MCF 10A (cell line): ENCODE measurements at regions of chr11 and their contacts with region 1.

Region 1: DNA sequence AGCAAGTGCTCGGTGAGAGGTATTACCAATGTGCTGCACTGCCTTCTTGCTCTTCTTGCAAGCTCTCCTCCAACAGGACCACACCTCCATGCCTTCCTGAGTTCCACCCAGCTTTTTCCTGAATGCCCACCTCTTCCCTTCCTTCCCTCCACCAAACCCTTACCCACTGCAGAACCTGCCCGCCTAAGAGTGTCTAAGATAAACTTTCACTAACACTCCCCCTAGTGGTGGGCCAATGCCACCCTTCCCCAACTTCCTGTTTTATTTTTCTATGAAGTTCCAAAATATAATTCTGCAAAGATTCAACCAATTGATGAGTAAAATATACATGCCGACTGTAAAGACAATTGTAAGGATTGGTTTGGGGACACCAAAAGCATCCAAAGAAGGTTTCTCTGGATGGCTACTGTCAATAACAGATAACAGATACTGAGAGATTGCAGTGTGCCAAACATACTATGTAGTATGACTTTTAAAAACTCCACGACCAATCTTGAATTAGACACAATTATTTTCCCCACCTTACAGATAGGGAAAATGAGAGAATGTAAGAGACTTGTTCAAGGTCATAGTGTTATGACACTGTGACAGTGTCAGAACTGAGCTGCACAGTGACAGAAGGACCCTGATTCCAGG is 38.6 kb upstream of the BMAL1 start:
- DNase-seq: peak; percentile 72
- H3K4me3 Mint-ChIP-seq: no peak overlapping the region
- H3K27ac Mint-ChIP-seq: no peak overlapping the region
- H3K4me1 Mint-ChIP-seq: peaks cover 6% of the 10 kb centered on the region
- H3K27me3 Mint-ChIP-seq: no peaks in the 10 kb centered on the region
- CTCF ChIP-seq: peak; percentile 68

Region 2: GRCh38 chr11:13126430-13126829 is 112.6 kb before region 1 on chr11:
- CTCF ChIA-PET with region 1: no interaction called
- POLR2A ChIA-PET with region 1: no interaction called
- intact Hi-C with region 1: no loop called
- DNase-seq: peak; percentile 98
- H3K4me3 Mint-ChIP-seq: peak overlapping the region; percentile 53
- H3K27ac Mint-ChIP-seq: peak overlapping the region; percentile 76
- H3K4me1 Mint-ChIP-seq: peaks cover 13% of the 10 kb centered on the region
- H3K27me3 Mint-ChIP-seq: no peaks in the 10 kb centered on the region
- CTCF ChIP-seq: no peak

Region 3: GRCh38 chr11:13216019-13216710 is 22.8 kb before region 1 on chr11:
- CTCF ChIA-PET with region 1: interaction called, 47 read pairs
- POLR2A ChIA-PET with region 1: interaction called, 3 read pairs
- intact Hi-C with region 1: no loop called
- DNase-seq: peak; percentile 92
- H3K4me3 Mint-ChIP-seq: peak overlapping the region; percentile 32
- H3K27ac Mint-ChIP-seq: peak overlapping the region; percentile 85
- H3K4me1 Mint-ChIP-seq: peaks cover 26% of the 10 kb centered on the region
- H3K27me3 Mint-ChIP-seq: no peaks in the 10 kb centered on the region
- CTCF ChIP-seq: no peak

Region 4: GRCh38 chr11:13249996-13250395 is 11.0 kb after region 1 on chr11:
- CTCF ChIA-PET with region 1: interaction called, 19 read pairs
- POLR2A ChIA-PET with region 1: interaction called, 4 read pairs
- intact Hi-C with region 1: no loop called
- DNase-seq: peak; percentile 36
- H3K4me3 Mint-ChIP-seq: no peak overlapping the region
- H3K27ac Mint-ChIP-seq: no peak overlapping the region
- H3K4me1 Mint-ChIP-seq: no peaks in the 10 kb centered on the region
- H3K27me3 Mint-ChIP-seq: no peaks in the 10 kb centered on the region
- CTCF ChIP-seq: peak; percentile 52